Activated CD8-positive, alpha-beta T cell treated with anti-CD3 and anti-CD28 coated beads for 36 hours (primary cell): ENCODE measurements at regions of chr3 and their contacts with region 1.

Region 1: GRCh38 chr3:192444096-192444790 is 283.1 kb downstream of the FGF12 start:
- DNase-seq: peak; percentile 64
- ATAC-seq: peak; percentile 83
- H3K4me3 Mint-ChIP-seq: no peak overlapping the region
- H3K27ac Mint-ChIP-seq: no peak overlapping the region
- H3K4me1 Mint-ChIP-seq: no peaks in the 10 kb centered on the region
- H3K27me3 Mint-ChIP-seq: peaks cover 10% of the 10 kb centered on the region
- CTCF ChIP-seq: peak; percentile 93

Region 2: GRCh38 chr3:191430103-191430502 is 1014.1 kb before region 1 on chr3:
- CTCF ChIA-PET with region 1: no interaction called
- POLR2A ChIA-PET with region 1: no interaction called
- intact Hi-C with region 1: loop called (anchors 5 kb)
- DNase-seq: no peak
- ATAC-seq: no peak
- H3K4me3 Mint-ChIP-seq: no peak overlapping the region
- H3K27ac Mint-ChIP-seq: no peak overlapping the region
- H3K4me1 Mint-ChIP-seq: no peaks in the 10 kb centered on the region
- H3K27me3 Mint-ChIP-seq: no peaks in the 10 kb centered on the region
- CTCF ChIP-seq: no peak

Region 3: GRCh38 chr3:192188218-192188835 is 255.9 kb before region 1 on chr3:
- CTCF ChIA-PET with region 1: interaction called, 45 read pairs
- POLR2A ChIA-PET with region 1: no interaction called
- intact Hi-C with region 1: loop called (anchors 5 kb)
- DNase-seq: peak; percentile 70
- ATAC-seq: peak; percentile 45
- H3K4me3 Mint-ChIP-seq: no peak overlapping the region
- H3K27ac Mint-ChIP-seq: no peak overlapping the region
- H3K4me1 Mint-ChIP-seq: no peaks in the 10 kb centered on the region
- H3K27me3 Mint-ChIP-seq: no peaks in the 10 kb centered on the region
- CTCF ChIP-seq: peak; percentile 70

Region 4: DNA sequence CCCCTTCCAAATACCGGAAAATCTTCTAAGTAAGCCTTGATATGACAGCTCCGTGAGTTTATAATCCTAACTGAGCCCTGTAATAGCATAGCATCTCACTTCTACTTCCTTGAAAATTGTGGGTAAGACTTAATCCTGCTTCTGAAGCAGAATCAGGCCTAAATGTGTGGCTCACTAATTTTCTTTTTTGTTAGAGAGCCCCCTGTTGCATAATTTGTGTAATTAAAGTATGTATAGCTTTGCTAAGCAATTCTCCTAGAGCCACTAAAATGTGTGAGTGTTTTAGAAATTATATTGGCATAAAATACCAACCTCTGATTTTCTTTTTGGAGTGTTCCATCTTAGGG is 21.3 kb before region 1 on chr3:
- CTCF ChIA-PET with region 1: interaction called, 18 read pairs
- POLR2A ChIA-PET with region 1: no interaction called
- intact Hi-C with region 1: no loop called
- DNase-seq: no peak
- ATAC-seq: no peak
- H3K4me3 Mint-ChIP-seq: no peak overlapping the region
- H3K27ac Mint-ChIP-seq: no peak overlapping the region
- H3K4me1 Mint-ChIP-seq: no peaks in the 10 kb centered on the region
- H3K27me3 Mint-ChIP-seq: no peaks in the 10 kb centered on the region
- CTCF ChIP-seq: no peak

Region 5: GRCh38 chr3:192433704-192434103 is 10.5 kb before region 1 on chr3:
- CTCF ChIA-PET with region 1: interaction called, 36 read pairs
- POLR2A ChIA-PET with region 1: no interaction called
- intact Hi-C with region 1: no loop called
- DNase-seq: no peak
- ATAC-seq: no peak
- H3K4me3 Mint-ChIP-seq: no peak overlapping the region
- H3K27ac Mint-ChIP-seq: no peak overlapping the region
- H3K4me1 Mint-ChIP-seq: no peaks in the 10 kb centered on the region
- H3K27me3 Mint-ChIP-seq: no peaks in the 10 kb centered on the region
- CTCF ChIP-seq: no peak

Region 6: DNA sequence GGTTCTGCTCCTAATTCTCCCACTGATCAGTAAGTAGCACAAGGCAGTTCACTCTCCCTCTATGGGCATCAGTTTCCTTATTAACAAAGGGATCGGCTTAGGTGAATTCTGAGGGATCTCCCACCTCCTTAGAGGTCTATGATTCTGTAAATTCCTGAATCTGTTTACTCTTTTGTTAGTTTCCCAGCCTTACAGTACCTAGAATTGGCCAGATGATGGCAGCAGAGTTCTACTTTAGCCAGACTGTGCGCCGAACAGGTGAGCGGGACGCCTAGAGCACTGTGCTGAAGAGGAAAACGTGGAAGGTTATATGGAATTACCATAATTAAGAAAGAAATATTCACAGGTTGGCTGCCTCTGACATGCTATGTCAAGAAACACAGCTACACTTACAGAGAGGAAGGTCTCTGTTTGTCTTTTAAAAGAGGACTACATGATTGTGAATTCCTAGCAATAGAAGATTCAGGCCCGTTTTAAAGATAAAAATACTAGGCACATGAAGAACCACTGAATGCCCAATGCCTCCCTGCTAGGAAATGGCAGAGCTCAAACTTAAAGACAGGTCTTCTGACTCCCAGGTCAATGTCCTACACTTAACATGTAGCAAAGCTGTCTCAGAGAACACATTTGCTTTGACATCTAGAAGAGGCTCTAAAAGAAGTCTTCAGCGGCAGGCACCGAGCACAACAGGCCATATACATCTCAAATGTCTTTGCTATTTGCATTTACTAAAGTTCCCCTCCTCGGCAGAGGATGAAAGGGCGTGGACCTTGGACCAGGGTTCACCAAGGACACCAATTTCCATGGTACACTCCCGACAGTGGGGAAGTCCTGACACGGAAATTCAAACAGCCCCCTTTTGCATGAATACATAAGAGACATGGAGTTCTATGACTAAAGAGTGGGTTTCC is 23.2 kb after region 1 on chr3:
- CTCF ChIA-PET with region 1: interaction called, 14 read pairs
- POLR2A ChIA-PET with region 1: no interaction called
- intact Hi-C with region 1: no loop called
- DNase-seq: peak; percentile 55
- ATAC-seq: peak; percentile 90
- H3K4me3 Mint-ChIP-seq: no peak overlapping the region
- H3K27ac Mint-ChIP-seq: no peak overlapping the region
- H3K4me1 Mint-ChIP-seq: no peaks in the 10 kb centered on the region
- H3K27me3 Mint-ChIP-seq: peaks cover 8% of the 10 kb centered on the region
- CTCF ChIP-seq: peak; percentile 80

Region 7: DNA sequence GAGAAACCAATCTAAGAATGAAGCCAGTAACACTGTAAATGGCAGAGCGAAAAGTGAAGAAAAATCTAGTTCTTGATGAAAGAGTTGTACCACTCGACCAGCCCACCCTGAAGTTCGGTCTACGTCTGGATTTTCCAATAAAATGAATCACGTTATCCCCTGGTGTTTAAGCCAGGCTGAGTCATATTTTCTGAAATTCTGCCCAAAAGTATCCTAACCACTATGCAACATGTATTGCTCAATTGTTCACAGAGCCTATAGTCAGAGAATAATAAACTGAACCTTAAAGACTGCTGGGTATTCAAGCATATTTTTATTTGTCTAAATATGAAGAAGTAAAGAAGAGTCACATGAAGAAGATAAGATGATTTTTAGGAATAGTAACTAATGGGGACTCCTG is 37.4 kb after region 1 on chr3:
- CTCF ChIA-PET with region 1: no interaction called
- POLR2A ChIA-PET with region 1: no interaction called
- intact Hi-C with region 1: no loop called
- DNase-seq: no peak
- ATAC-seq: no peak
- H3K4me3 Mint-ChIP-seq: no peak overlapping the region
- H3K27ac Mint-ChIP-seq: no peak overlapping the region
- H3K4me1 Mint-ChIP-seq: no peaks in the 10 kb centered on the region
- H3K27me3 Mint-ChIP-seq: peaks cover 5% of the 10 kb centered on the region
- CTCF ChIP-seq: no peak